ENCODE measurements at regions of chr2 and their contacts with region 1.

Region 1: DNA sequence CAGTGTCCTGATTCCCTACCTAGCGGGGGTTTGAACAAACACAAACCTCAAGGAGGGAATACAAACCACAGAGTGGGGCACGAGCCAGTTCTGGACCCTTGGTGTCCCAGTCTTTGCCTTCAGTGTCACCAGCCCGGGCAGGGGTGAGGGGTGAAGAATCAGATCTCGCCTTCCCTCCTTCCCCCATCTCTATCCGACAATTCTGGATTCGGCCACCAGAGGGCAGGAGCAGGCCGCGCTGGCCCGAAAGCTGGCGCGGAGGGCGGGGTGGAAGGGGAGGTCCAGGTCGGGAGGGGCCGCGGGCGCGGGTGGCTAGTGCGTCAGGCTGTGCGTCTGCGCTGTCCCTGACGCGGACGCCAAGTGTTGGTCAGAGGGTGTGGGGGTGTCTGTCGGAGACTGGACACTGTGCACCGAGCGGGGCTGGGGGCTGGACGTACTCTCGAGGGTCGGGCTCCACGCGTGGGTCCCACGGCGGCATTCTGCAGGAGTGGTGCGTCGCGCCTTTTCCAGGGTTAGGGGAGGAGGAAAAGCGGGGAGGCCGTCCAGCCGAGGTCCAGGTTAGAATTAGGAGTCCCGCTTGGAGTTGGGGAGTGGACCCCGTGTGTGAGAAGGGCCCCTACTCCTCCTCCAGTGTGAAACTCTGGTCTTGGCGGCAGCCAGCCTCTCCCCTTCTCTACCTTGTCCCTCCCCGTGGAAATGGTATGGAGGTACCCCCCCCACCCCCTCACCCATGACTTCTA is 2.9 kb upstream of the CRYBA2 start:
- DNase-seq: peak; percentile 87
- ATAC-seq: peak; percentile 78 to 93
- H3K4me3 ChIP-seq: peak overlapping the region; percentile 49
- H3K27ac ChIP-seq: peak overlapping the region; percentile 79 to 84
- H3K4me1 ChIP-seq: peaks cover 10% of the 10 kb centered on the region
- CTCF ChIP-seq: peak; percentile 87
- EP300 ChIP-seq: no peak
- POLR2A ChIP-seq: peak; percentile 84
- RAD21 ChIP-seq: peak; percentile 74 to 80

Region 2: GRCh38 chr2:218953481-218953881 is 42.7 kb before region 1 on chr2:
- CTCF ChIA-PET with region 1: interaction called, 10 read pairs
- POLR2A ChIA-PET with region 1: no interaction called
- DNase-seq: no peak
- ATAC-seq: peak in 1 of 2 experiments; percentile 68; a peak in 3 of 6 replicates
- H3K4me3 ChIP-seq: no peak overlapping the region
- H3K27ac ChIP-seq: no peak overlapping the region
- H3K4me1 ChIP-seq: no peaks in the 10 kb centered on the region
- CTCF ChIP-seq: no peak
- EP300 ChIP-seq: no peak
- POLR2A ChIP-seq: no peak
- RAD21 ChIP-seq: 0 out of 5 replicates have a peak, but pooled peaks of 1 of the 2 experiments have one; percentile 7

Region 3: DNA sequence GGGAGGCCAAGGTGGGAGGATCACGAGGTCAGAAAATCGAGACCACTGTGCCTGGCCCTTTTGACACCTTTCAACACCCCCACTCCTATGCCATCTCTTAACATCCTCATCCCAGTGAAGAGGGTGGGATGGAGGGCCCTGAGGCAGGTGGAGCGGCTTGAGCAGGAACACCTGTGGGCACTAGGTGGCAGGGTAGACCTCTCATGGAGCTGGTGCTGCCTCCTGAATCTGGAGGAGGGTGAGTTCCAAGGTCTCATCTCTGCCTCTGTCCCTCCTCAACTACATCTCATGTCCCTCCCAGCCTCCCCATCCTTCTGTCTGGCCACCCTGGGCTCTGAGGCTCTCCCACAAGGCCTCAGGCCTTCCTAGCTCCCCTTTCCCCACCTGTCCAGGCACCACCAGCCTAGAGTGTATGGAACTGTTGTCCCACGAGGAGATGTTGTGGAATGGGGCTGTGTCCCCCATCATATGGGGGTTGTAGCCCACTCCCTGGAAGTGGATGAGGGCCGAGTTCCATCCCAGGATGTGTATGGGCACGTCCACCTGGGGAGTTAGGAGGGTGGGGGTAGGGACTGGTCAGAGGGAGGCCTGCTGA is 14.1 kb after region 1 on chr2:
- CTCF ChIA-PET with region 1: interaction called, 53 read pairs
- POLR2A ChIA-PET with region 1: no interaction called
- DNase-seq: peak; percentile 56 to 64
- ATAC-seq: peak; percentile 93 to 96
- H3K4me3 ChIP-seq: no peak overlapping the region
- H3K27ac ChIP-seq: no peak overlapping the region
- H3K4me1 ChIP-seq: no peaks in the 10 kb centered on the region
- CTCF ChIP-seq: peak; percentile 38; the same call in 2 of the 3 replicates
- EP300 ChIP-seq: no peak
- POLR2A ChIP-seq: no peak
- RAD21 ChIP-seq: peak; percentile 32 to 59; a peak in 3 of 5 replicates

Region 4: DNA sequence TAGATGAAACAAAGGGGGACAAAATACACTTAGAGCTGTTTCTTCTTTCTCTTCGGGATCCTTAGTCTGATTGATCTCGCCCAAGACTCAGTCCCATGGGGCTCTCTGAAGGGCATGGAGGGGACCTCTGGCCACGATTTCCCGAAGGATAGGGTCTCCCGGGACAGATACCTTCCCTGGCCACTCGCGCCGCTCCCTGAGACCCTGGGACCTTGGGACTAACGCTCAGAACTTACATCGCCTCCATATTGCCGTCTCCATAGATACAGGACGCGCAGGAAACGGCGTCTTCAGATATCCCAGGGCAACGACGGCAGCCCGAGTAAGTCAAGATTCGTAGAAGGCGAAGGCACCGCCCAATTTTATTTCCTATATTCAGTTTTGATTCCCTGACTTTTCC is 45.1 kb after region 1 on chr2 and contains the start of gene CFAP65:
- CTCF ChIA-PET with region 1: no interaction called
- POLR2A ChIA-PET with region 1: no interaction called
- DNase-seq: peak; percentile 53 to 68
- ATAC-seq: peak; percentile 75 to 85
- H3K4me3 ChIP-seq: peak within 1 kb of the TSS; percentile 49
- H3K27ac ChIP-seq: no peak within 1 kb of the TSS
- H3K4me1 ChIP-seq: peaks cover 3% of the 10 kb centered on the region; the same call in 1 of the 3 replicates
- CTCF ChIP-seq: no peak
- EP300 ChIP-seq: no peak
- POLR2A ChIP-seq: no peak
- RAD21 ChIP-seq: no peak
- polyA plus RNA-seq, gene CFAP65: 0.09 and 0.12 TPM in 2 replicates